Caco-2 (cell line): ENCODE measurements at regions of chr1 and their contacts with region 1.

Region 1: DNA sequence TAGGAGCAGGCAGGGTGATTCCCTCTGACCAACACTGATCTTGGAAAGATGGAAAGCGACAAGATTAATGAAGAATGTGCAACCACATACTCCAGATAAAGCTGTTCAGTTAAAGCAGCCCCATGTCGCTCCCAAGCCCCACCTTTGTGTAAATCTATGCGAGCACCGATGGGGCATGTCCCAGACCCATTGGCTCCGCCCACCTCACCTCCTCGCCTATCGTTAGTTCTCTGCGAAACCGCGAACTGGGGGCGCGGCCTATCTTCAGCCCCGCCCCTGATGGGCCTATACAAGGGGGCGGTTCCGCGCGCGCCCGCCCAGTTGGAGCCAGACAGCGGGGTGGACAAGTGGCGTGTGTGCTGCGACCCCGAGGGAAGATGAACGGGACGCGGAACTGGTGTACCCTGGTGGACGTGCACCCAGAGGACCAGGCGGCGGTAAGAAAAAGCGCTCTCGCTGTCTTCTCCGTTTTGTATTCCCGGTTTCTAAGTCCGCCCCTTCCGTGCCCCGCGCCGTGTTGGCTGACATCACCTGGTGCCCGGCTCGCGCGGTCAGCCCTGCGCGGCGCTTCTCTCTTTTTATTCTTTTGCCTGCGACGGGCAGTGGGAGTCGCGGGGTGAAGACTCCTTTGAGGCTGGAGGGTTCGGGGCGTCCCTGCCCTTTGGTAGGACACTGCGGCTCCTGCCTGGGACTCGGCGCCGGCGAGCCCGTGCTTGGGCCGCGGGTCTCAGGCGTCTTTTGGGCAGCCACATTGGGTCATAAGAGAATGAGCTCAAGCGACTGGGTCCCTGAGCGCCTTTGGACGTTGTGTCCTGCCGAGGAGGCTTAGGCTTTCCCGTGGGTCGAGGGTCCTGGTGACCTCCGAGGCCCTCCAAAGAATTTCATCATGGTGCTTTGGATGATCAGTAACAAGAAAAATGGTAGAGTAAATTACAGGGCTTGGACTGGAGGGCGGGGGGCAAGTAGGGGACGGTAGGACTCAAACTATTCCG is at the start of gene TUFT1:
- DNase-seq: peak; percentile 97
- H3K4me3 ChIP-seq: peak within 1 kb of the TSS; percentile 51
- H3K4me3 Mint-ChIP-seq: peak within 1 kb of the TSS; percentile 96
- H3K27ac Mint-ChIP-seq: peak within 1 kb of the TSS; percentile 91
- H3K4me1 ChIP-seq: peaks cover 22% of the 10 kb centered on the region
- H3K4me1 Mint-ChIP-seq: peaks cover 61% of the 10 kb centered on the region
- H3K27me3 ChIP-seq: no peaks in the 10 kb centered on the region
- H3K27me3 Mint-ChIP-seq: no peaks in the 10 kb centered on the region
- CTCF ChIP-seq: no peak
- total RNA-seq, gene TUFT1: 34.9 and 36.6 TPM in 2 replicates

Region 2: DNA sequence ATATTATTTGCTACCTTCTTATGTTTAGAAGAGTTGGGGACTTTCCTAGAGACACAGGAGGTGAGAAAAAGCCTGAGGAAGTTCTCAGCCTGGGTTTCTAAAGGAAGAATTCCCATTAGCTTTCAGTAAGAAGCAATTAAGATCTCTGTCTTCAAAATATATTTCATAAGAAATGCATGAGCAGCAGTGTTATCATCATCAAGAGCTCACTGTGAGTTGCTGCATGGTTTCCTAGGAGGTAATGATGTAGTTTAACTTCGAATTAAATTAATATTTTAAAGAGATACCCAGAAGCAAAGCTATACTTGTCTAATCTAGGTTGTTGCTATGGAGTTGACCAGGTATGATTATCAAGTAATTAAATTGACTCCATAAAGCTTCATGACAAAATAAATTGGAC is 75.3 kb before region 1 on chr1:
- CTCF ChIA-PET with region 1: interaction called, 11 read pairs
- POLR2A ChIA-PET with region 1: interaction called, 9 read pairs
- intact Hi-C with region 1: no loop called
- DNase-seq: no peak
- H3K4me3 ChIP-seq: no peak overlapping the region
- H3K4me3 Mint-ChIP-seq: no peak overlapping the region
- H3K27ac Mint-ChIP-seq: no peak overlapping the region
- H3K4me1 ChIP-seq: peaks cover 7% of the 10 kb centered on the region; the same call in 1 of the 2 replicates
- H3K4me1 Mint-ChIP-seq: peaks cover 7% of the 10 kb centered on the region
- H3K27me3 ChIP-seq: no peaks in the 10 kb centered on the region
- H3K27me3 Mint-ChIP-seq: no peaks in the 10 kb centered on the region
- CTCF ChIP-seq: no peak

Region 3: GRCh38 chr1:151611832-151612500 is 71.7 kb after region 1 on chr1 and contains the start of gene SNX27:
- CTCF ChIA-PET with region 1: no interaction called
- POLR2A ChIA-PET with region 1: interaction called, 7 read pairs
- intact Hi-C with region 1: loop called (anchors 2 kb)
- DNase-seq: peak; percentile 92 to 95
- H3K4me3 ChIP-seq: peak within 1 kb of the TSS; percentile 98
- H3K4me3 Mint-ChIP-seq: peak within 1 kb of the TSS; percentile 98
- H3K27ac Mint-ChIP-seq: peak within 1 kb of the TSS; percentile 96
- H3K4me1 ChIP-seq: peaks cover 25% of the 10 kb centered on the region
- H3K4me1 Mint-ChIP-seq: peaks cover 45% of the 10 kb centered on the region
- H3K27me3 ChIP-seq: no peaks in the 10 kb centered on the region
- H3K27me3 Mint-ChIP-seq: no peaks in the 10 kb centered on the region
- CTCF ChIP-seq: no peak
- total RNA-seq, gene SNX27: 47.2 and 47.4 TPM in 2 replicates